Left cardiac atrium (tissue), 4 donors: ENCODE measurements at regions of chr19 and their contacts with region 1.

Region 1: DNA sequence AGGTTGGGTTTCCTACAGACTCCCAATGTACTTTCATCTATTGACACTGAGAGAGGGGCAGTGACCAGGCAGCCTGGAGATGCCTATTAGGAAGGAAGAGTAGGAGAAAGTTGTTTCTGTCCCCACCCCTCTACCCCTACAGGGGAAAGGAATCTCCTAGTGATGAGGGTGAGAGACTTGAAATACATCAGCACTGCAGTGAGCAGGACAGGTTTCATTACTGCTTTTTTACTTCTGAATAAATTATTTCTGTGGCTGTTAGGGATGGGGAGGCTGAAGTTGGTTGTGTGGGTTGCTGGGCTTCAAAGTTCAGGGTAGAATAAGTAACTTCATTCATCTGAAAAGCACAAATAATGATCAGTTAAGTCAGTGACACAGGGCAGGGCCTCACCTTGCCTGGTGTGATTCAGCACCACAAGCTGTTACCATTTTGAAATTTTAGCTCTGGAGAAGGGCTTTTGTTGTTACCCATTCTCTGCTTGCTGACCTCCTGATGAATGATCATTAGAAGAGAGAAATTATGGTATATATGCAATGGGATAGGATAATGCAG is 19.3 kb downstream of the CEACAM1 start:
- DNase-seq: no peak
- ATAC-seq: no peak

Region 2: GRCh38 chr19:42468273-42468796 is 40.6 kb before region 1 on chr19:
- intact Hi-C with region 1: loop called in 1 of 2 experiments (anchors 5 kb)
- DNase-seq: no peak
- ATAC-seq: no peak